GM12878 (cell line): ENCODE measurements at regions of chr1 and their contacts with region 1.

Region 1: DNA sequence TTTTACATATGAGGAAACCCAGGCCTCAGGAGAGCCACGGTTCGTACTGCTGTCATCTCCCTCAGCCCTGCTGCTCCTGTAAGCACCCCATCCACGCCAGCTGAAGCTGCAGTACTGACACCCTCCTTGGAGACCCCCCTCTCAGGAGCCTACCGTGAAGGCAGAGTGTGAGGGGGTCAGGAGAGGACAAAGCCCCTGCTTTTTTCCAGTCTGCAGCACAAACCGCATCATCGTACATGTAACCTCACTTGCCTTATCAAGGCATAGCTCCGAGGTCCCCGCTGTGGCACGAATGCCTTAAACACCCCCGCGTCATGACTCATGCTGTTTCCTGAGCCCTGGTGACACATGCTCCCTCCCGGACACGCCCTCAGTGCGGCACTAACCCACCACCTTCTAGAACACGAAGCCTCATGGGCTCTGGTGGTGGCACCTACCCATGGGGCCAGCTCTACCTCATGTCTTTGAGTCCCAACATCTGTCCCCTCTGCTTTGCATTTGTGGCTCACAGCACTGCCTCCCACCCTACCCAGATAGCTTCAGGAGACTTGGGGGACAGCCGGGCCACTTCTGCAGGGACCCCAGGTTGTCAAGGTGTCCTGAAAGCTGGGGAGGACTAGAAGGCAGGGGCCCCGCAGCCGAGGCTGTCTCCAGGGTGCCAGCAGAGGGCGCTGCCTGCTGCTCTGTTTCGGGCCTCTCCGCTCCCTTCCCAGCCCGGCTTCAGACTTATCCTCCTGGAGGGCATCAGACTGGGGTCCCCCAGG is 4.9 kb downstream of the SH3BGRL3 start:
- DNase-seq: no peak
- ATAC-seq: peak; percentile 60
- H3K4me3 ChIP-seq: no peak overlapping the region
- H3K27ac ChIP-seq: no peak overlapping the region
- H3K4me1 ChIP-seq: peaks cover 70% of the 10 kb centered on the region
- H3K27me3 ChIP-seq: no peaks in the 10 kb centered on the region
- CTCF ChIP-seq: peak; percentile 86 to 98 (median 90)
- EP300 ChIP-seq: no peak
- POLR2A ChIP-seq: peak; percentile 43
- RAD21 ChIP-seq: peak; percentile 84

Region 2: DNA sequence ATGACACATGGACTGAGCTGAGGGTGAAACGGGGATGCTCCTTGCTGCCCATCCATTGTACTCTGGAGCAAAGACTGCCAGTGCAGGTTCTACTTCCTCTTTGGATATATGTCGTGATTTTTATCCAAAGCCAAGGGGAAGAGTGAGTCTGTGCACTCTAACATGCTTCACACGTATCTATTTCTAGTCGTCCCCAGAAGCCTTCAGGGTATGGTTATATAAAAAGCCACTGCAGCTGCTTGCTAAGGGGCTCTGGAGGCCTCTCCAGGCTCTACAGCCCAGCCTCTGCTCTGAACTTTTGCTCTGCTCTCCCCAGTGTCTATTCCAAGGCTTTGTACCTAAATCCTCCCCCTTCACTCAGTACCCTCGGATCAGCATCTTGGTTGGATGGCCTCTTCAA is 307.0 kb before region 1 on chr1:
- CTCF ChIA-PET with region 1: no interaction called
- POLR2A ChIA-PET with region 1: no interaction called
- RAD21 ChIA-PET with region 1: no interaction called
- SMC1A ChIA-PET with region 1: no interaction called
- in situ Hi-C with region 1: no loop called
- intact Hi-C with region 1: no loop called
- DNase-seq: no peak
- ATAC-seq: no peak
- H3K4me3 ChIP-seq: no peak overlapping the region
- H3K27ac ChIP-seq: no peak overlapping the region
- H3K4me1 ChIP-seq: no peaks in the 10 kb centered on the region
- H3K27me3 ChIP-seq: no peaks in the 10 kb centered on the region
- CTCF ChIP-seq: no peak
- EP300 ChIP-seq: no peak
- POLR2A ChIP-seq: no peak
- RAD21 ChIP-seq: no peak

Region 3: DNA sequence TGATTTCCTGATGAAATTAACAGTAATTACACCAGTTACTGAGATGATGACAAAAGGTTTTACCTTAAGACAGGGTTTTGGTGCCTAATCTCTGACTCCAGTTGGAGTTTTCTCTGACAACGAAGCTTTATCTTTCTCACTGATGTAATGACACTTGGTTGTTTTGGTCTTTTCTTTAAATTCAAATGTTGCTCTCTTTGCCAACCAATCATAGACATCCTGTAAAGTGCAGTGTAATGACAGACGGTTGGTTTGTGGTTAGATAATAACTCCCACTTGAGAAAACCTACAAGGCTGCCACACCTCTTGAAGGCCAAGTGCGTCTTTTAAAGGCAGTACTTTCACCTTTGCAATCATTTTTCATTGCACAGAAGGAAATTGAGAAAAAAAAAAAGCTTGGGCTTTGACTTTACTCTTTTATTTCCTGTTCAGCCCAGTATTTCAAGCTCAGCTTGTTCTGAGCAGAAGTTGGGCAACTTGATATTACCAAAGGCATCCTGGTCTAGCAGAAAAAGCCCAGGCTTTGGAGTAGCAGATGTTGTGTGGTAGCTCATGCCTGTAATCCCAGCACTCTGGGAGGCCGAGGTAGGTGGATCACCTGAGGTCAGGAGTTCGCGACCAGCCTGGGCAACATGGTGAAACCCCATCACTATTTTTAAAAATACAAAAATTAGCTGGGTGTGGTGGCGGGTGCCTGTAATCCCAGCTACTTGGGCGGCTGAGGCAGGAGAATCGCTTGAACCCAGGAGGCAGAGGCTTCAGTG is 158.3 kb before region 1 on chr1:
- CTCF ChIA-PET with region 1: interaction called, 14 read pairs
- POLR2A ChIA-PET with region 1: no interaction called
- RAD21 ChIA-PET with region 1: no interaction called
- SMC1A ChIA-PET with region 1: no interaction called
- in situ Hi-C with region 1: no loop called
- intact Hi-C with region 1: no loop called
- DNase-seq: no peak
- ATAC-seq: peak; percentile 97
- H3K4me3 ChIP-seq: no peak overlapping the region
- H3K27ac ChIP-seq: peak overlapping the region; percentile 27; the same call in 1 of the 2 replicates
- H3K4me1 ChIP-seq: peaks cover 4% of the 10 kb centered on the region
- H3K27me3 ChIP-seq: no peaks in the 10 kb centered on the region
- CTCF ChIP-seq: no peak
- EP300 ChIP-seq: no peak
- POLR2A ChIP-seq: no peak
- RAD21 ChIP-seq: no peak

Region 4: DNA sequence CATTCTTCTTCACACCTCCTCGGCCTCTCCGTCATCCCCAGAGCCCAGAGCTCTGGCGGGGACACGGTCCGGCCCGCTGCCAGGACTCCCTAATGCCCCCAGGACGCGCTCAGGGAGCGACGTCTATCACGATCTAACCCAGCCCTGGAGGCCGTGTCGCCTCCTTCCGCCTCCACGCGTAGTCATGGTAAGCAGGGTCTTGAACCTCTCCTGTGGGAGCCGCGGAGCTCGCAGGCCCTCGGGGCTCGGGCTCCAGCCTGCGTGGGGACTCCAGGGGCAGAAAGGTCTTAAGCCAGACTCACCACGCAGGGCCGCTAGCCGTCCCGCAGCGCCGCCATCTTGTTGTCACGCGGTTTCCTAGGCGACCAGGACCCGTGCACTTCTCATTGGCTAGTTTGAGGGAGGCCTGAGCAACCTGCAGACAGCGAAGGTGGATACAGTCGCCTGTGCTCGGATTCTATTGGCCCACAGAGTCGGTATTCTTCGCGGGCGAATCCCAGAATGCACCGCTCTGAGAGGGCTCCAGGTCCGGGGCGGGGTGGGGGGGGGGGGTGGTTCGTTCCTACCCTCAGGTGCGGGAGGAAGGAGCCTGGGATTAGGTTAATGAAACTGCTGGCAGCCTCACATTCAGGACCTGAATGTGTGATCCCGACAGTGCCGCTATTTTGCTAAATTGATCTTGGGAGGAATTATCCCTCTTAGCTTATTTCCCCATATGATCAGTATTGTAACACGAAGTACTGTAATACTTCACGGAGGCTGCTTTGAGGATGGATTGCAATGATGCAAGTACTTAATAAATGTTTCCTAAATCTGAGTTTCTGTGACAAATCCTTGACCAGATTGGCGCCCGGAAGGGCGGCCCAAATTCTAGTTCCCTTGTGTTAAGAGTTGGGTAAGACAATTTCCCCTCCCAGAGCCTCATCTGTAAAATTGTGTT is 21.8 kb after region 1 on chr1 and contains the start of gene UBXN11:
- CTCF ChIA-PET with region 1: interaction called, 34 read pairs
- POLR2A ChIA-PET with region 1: interaction called, 30 read pairs
- RAD21 ChIA-PET with region 1: interaction called, 18 read pairs
- SMC1A ChIA-PET with region 1: interaction called, 12 read pairs
- in situ Hi-C with region 1: no loop called
- intact Hi-C with region 1: no loop called
- DNase-seq: peak; percentile 87
- ATAC-seq: peak; percentile 100
- H3K4me3 ChIP-seq: peak within 1 kb of the TSS; percentile 92
- H3K27ac ChIP-seq: peak within 1 kb of the TSS; percentile 94
- H3K4me1 ChIP-seq: peaks cover 14% of the 10 kb centered on the region
- H3K27me3 ChIP-seq: no peaks in the 10 kb centered on the region
- CTCF ChIP-seq: no peak
- EP300 ChIP-seq: no peak
- POLR2A ChIP-seq: peak; percentile 66
- RAD21 ChIP-seq: no peak
- polyA plus RNA-seq, gene UBXN11: 0.32 to 1.2 TPM

Region 5: DNA sequence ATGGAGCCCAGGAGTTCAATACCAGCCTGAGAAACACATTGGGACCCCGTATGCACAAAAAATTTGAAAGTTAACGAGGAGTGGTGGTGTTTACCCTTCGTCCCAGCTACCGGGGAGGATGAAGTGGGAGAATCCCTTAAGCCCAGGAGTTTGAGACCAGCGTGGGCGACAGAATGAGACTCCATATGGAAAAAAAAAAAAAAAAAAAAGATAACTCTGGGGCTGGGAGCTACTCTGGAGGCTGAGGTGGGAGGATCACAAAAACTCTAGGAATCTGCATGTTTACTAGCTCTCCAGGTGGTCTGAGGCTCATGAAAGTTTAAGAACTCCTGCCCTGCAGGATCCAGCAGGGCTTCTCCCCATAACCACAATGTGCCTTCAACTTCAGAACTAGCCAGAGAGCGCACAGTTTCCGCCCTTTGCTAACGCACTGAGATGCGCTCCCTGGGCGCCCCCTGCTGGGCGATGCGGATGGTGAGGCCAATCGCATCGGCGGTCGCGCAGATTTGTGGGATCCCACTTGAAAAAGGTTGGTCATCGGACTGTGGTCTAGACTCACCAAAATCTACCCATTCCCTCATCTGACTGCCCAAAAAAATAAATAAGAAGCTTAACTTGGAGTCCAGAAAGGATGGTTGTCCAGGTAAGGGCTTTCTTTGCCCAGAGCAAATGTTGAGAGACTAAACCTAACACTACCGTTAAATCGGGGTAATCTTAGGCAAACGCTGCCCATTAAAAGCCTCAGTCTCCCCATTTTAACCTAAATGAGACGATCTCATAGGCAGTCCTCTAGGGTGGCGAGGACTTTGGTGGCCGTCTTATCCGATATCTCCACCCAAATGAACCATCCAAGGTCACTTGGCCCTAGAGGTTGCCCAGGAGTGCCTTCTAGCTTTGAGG is 79.0 kb after region 1 on chr1:
- CTCF ChIA-PET with region 1: interaction called, 89 read pairs
- POLR2A ChIA-PET with region 1: no interaction called
- RAD21 ChIA-PET with region 1: interaction called, 29 read pairs
- SMC1A ChIA-PET with region 1: interaction called, 17 read pairs
- in situ Hi-C with region 1: no loop called
- intact Hi-C with region 1: loop called (anchors 2 kb)
- DNase-seq: peak; percentile 16
- ATAC-seq: peak; percentile 91
- H3K4me3 ChIP-seq: no peak overlapping the region
- H3K27ac ChIP-seq: no peak overlapping the region
- H3K4me1 ChIP-seq: no peaks in the 10 kb centered on the region; the same call in 1 of the 2 replicates
- H3K27me3 ChIP-seq: peaks cover 3 to 5% of the 10 kb centered on the region in 2 experiments; a peak in 3 of 4 replicates
- CTCF ChIP-seq: peak; percentile 85 to 98 (median 98)
- EP300 ChIP-seq: no peak
- POLR2A ChIP-seq: no peak
- RAD21 ChIP-seq: peak; percentile 81

Region 6: DNA sequence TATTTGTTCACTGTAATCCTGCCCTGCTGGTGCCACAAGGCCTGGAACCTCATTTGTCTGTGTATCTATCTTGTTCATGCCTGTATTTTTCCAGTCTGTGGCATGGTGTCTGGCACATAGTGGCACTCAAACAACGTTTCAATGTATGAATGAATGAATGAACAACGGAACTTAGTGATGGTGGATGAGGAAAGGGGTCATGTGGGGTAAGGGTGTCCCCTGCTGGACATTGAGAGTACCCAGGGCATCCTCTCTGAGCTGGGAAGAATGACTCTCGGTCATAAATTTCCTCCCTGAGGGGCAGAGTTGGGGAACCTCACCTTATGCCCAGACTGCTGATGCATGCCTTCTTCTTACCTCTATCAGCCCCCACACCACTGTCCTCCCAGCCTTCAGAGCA is 106.7 kb after region 1 on chr1:
- CTCF ChIA-PET with region 1: interaction called, 22 read pairs
- POLR2A ChIA-PET with region 1: no interaction called
- RAD21 ChIA-PET with region 1: interaction called, 25 read pairs
- SMC1A ChIA-PET with region 1: interaction called, 15 read pairs
- in situ Hi-C with region 1: no loop called
- intact Hi-C with region 1: no loop called
- DNase-seq: no peak
- ATAC-seq: peak; percentile 80
- H3K4me3 ChIP-seq: no peak overlapping the region
- H3K27ac ChIP-seq: no peak overlapping the region
- H3K4me1 ChIP-seq: no peaks in the 10 kb centered on the region
- H3K27me3 ChIP-seq: no peaks in the 10 kb centered on the region; a peak in 1 of 4 replicates
- CTCF ChIP-seq: peak; percentile 47 to 62 (median 54)
- EP300 ChIP-seq: no peak
- POLR2A ChIP-seq: no peak
- RAD21 ChIP-seq: peak; percentile 57